ENCODE measurements at regions of chr15 and their contacts with region 1.

Region 1: DNA sequence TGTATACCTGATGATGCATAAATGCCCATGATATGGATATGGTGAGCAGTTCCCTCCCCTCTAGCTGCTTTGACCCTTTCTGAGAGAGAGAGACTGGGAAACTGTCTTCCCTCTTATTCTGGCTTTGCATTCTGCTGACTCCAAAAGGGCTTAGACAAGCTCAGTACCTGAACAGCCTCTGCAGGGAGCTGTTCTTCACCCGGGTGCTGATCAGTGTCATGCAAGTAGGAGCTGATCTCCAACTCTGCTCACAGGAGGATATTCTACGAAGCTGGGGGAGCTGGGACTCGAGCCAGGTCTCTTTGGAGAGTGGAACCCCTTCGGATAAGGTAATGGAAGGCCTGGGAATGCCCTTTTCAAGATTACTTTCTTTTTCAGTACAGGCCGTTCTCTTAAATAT is 237.1 kb downstream of the RYR3 start:
- DNase-seq: peak in 27 of 42 donors; percentile 19 to 71 (median 42)

Region 2: GRCh38 chr15:32979710-32980109 is 568.2 kb before region 1 on chr15:
- intact Hi-C with region 1: no loop called
- DNase-seq: no peak

Region 3: GRCh38 chr15:33309602-33310276 is 238.1 kb before region 1 on chr15:
- intact Hi-C with region 1: loop called (anchors 10 kb)
- DNase-seq: peak in 32 of 42 donors; percentile 15 to 76 (median 55)

Region 4: DNA sequence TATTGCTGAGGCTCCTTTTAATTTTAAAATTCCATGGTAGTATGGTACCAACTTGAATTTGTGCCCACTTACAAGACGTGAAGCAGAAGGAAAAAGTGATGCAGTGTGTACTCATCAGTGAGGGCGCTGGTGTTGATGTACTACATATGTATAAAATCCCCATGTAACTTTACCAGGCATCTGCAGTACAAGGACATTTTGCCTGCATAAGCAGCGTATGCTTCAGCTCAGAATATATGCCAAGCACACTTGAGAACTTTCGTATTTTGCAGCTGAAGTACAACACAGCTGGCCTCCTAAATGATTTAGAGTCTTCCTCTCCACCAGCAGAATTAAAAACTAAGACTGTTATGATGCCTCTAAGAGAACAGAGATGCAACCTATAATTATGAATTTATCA is 128.2 kb before region 1 on chr15:
- intact Hi-C with region 1: no loop called
- DNase-seq: no peak

Region 5: GRCh38 chr15:33671456-33671855 is 123.6 kb after region 1 on chr15:
- intact Hi-C with region 1: no loop called
- DNase-seq: no peak

Measured in head of caudate nucleus (tissue), 42 donors.